CD4-positive, alpha-beta T cell (primary cell): ENCODE measurements at regions of chr9 and their contacts with region 1.

Region 1: GRCh38 chr9:5832543-5833529 is at the start of gene ERMP1:
- DNase-seq: peak; percentile 81 to 95 (median 90)
- ATAC-seq: peak; percentile 88
- H3K4me3 ChIP-seq: peak within 1 kb of the TSS; percentile 80
- H3K4me3 Mint-ChIP-seq: peak within 1 kb of the TSS; percentile 99
- H3K27ac ChIP-seq: peak within 1 kb of the TSS in 1 of 2 donors; percentile 36
- H3K27ac Mint-ChIP-seq: peak within 1 kb of the TSS; percentile 85
- H3K4me1 ChIP-seq: peaks cover 26% of the 10 kb centered on the region
- H3K4me1 Mint-ChIP-seq: peaks cover 53% of the 10 kb centered on the region
- H3K27me3 ChIP-seq: no peaks in the 10 kb centered on the region
- H3K27me3 Mint-ChIP-seq: no peaks in the 10 kb centered on the region
- CTCF ChIP-seq: peak; percentile 89
- total RNA-seq, gene ERMP1: 5.8 to 6.8 TPM

Region 2: DNA sequence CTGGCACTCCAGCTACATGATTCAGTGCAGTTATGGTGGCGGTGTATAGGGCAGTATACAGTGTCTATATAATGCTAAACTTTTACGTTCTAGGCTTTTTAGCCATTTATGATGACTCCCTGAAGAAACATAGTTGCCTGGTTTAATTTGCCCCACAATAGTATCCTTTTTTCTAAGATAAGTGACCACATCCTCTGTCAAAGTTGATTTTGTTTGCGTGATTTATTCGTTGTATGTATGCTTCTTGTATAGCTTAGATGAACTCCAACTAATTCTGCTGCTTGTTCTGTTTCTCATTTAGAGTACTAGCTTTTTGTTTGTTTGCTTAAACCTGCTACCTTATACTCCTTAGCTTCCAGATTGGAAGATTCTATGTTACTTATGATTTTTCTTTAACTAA is 83.5 kb before region 1 on chr9:
- CTCF ChIA-PET with region 1: no interaction called
- POLR2A ChIA-PET with region 1: no interaction called
- intact Hi-C with region 1: no loop called
- DNase-seq: no peak
- ATAC-seq: no peak
- H3K4me3 ChIP-seq: no peak overlapping the region
- H3K4me3 Mint-ChIP-seq: no peak overlapping the region
- H3K27ac ChIP-seq: no peak overlapping the region
- H3K27ac Mint-ChIP-seq: no peak overlapping the region
- H3K4me1 ChIP-seq: no peaks in the 10 kb centered on the region
- H3K4me1 Mint-ChIP-seq: peaks cover 6% of the 10 kb centered on the region
- H3K27me3 ChIP-seq: no peaks in the 10 kb centered on the region
- H3K27me3 Mint-ChIP-seq: no peaks in the 10 kb centered on the region
- CTCF ChIP-seq: no peak

Region 3: GRCh38 chr9:5790923-5791322 is 41.9 kb before region 1 on chr9:
- CTCF ChIA-PET with region 1: no interaction called
- POLR2A ChIA-PET with region 1: interaction called, 9 read pairs
- intact Hi-C with region 1: loop called in 1 of 2 experiments (anchors 5 kb)
- DNase-seq: no peak
- ATAC-seq: no peak
- H3K4me3 ChIP-seq: no peak overlapping the region
- H3K4me3 Mint-ChIP-seq: no peak overlapping the region
- H3K27ac ChIP-seq: no peak overlapping the region
- H3K27ac Mint-ChIP-seq: no peak overlapping the region
- H3K4me1 ChIP-seq: no peaks in the 10 kb centered on the region
- H3K4me1 Mint-ChIP-seq: peaks cover 54% of the 10 kb centered on the region
- H3K27me3 ChIP-seq: no peaks in the 10 kb centered on the region
- H3K27me3 Mint-ChIP-seq: no peaks in the 10 kb centered on the region
- CTCF ChIP-seq: no peak

Region 4: GRCh38 chr9:5851445-5851844 is 18.6 kb after region 1 on chr9:
- CTCF ChIA-PET with region 1: interaction called, 34 read pairs
- POLR2A ChIA-PET with region 1: interaction called, 4 read pairs
- intact Hi-C with region 1: no loop called
- DNase-seq: peak in 7 of 14 experiments; percentile 4 to 68 (median 47)
- ATAC-seq: peak; percentile 58
- H3K4me3 ChIP-seq: no peak overlapping the region
- H3K4me3 Mint-ChIP-seq: no peak overlapping the region
- H3K27ac ChIP-seq: peak overlapping the region in 1 of 2 donors; percentile 30
- H3K27ac Mint-ChIP-seq: peak overlapping the region; percentile 65
- H3K4me1 ChIP-seq: peaks cover 20% of the 10 kb centered on the region
- H3K4me1 Mint-ChIP-seq: peaks cover 32% of the 10 kb centered on the region
- H3K27me3 ChIP-seq: no peaks in the 10 kb centered on the region
- H3K27me3 Mint-ChIP-seq: no peaks in the 10 kb centered on the region
- CTCF ChIP-seq: no peak

Region 5: GRCh38 chr9:5886114-5886939 is 53.5 kb after region 1 on chr9:
- CTCF ChIA-PET with region 1: interaction called, 6 read pairs
- POLR2A ChIA-PET with region 1: interaction called, 10 read pairs
- intact Hi-C with region 1: no loop called
- DNase-seq: peak; percentile 66 to 86 (median 73)
- ATAC-seq: peak; percentile 94
- H3K4me3 ChIP-seq: no peak overlapping the region
- H3K4me3 Mint-ChIP-seq: no peak overlapping the region
- H3K27ac ChIP-seq: no peak overlapping the region
- H3K27ac Mint-ChIP-seq: no peak overlapping the region
- H3K4me1 ChIP-seq: peaks cover 10% of the 10 kb centered on the region
- H3K4me1 Mint-ChIP-seq: no peaks in the 10 kb centered on the region
- H3K27me3 ChIP-seq: no peaks in the 10 kb centered on the region
- H3K27me3 Mint-ChIP-seq: no peaks in the 10 kb centered on the region
- CTCF ChIP-seq: peak; percentile 90

Region 6: DNA sequence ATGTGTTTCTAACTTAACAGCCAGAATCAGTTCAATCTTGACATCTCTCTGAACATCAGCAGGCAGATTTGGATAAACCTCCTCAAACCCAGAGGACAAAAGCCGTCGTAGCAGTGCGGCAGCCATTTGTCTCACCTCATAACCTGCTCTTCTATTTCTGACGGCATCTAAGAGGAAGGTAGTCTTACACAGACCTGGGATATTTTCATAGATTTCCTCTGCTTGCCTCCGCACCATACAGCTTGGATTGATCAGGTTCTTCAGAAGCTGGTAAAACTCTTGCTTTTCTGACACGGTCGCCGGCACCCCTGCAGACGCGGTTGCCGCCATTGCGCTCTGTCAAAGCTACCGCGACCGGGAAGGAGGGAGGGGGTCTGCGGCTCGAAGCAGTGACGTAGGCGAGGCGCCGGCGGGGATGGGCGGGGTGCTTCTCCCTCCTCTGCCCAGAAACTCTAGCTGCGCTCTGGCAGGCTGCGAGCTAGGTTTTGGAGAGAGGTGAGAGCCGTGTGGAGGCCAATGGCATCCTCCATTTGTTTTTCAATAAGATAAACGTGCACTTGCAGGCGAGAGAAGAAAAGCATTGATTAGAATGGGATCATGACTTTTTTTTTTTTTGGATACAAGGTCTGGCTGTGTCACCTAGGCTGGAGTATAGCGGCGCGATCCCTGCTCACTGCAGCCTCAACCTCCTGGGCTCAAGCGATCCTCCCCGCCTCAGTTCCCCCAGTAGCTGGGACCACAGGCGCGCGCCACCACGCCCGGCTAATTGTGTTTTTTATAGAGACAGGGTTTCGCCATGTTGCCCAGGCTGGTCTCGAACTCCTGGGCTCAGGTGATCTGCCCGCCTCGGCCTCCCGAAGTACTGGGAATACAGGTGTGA is 182.7 kb after region 1 on chr9 and contains the start of gene RANBP6:
- CTCF ChIA-PET with region 1: interaction called, 3 read pairs
- POLR2A ChIA-PET with region 1: interaction called, 11 read pairs
- intact Hi-C with region 1: no loop called
- DNase-seq: peak; percentile 82 to 95 (median 89)
- ATAC-seq: peak; percentile 98
- H3K4me3 ChIP-seq: peak within 1 kb of the TSS; percentile 86
- H3K4me3 Mint-ChIP-seq: peak within 1 kb of the TSS; percentile 94
- H3K27ac ChIP-seq: peak within 1 kb of the TSS; percentile 72 to 83
- H3K27ac Mint-ChIP-seq: peak within 1 kb of the TSS; percentile 97
- H3K4me1 ChIP-seq: peaks cover 18% of the 10 kb centered on the region
- H3K4me1 Mint-ChIP-seq: peaks cover 41% of the 10 kb centered on the region
- H3K27me3 ChIP-seq: no peaks in the 10 kb centered on the region
- H3K27me3 Mint-ChIP-seq: no peaks in the 10 kb centered on the region
- CTCF ChIP-seq: no peak
- total RNA-seq, gene RANBP6: 36.7 to 40.6 TPM